ENCODE measurements at regions of chr3 and their contacts with region 1.

Region 1: GRCh38 chr3:115713284-115713683 is 90.0 kb downstream of the GAP43 start:
- DNase-seq: no peak
- CTCF ChIP-seq: no peak

Region 2: DNA sequence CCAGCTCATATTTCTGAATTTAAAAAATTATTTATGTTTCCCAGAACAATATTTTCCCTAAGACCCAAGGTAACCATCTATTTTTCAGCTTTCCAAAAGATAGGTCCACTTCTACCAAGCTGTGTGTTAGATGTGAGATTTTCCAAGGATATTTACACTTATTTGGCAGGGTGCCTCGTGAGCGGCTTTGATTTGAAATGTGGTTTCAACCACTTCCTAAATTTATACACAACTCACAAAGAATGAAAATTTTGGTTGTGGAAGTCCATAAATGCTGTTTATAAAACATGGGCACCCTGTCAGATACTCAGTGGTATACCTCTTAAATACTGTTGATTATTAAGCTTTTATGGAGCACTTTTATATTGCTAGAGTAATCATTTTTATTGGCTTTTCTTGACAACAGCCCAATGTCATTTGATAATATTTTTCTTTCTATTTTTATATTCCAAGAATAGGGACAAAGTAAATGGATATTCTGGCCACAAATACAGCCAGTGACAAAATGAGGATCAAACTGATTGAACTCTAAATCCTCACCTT is 32.4 kb before region 1 on chr3:
- CTCF ChIA-PET with region 1: no interaction called
- POLR2A ChIA-PET with region 1: no interaction called
- DNase-seq: no peak
- CTCF ChIP-seq: no peak

Region 3: DNA sequence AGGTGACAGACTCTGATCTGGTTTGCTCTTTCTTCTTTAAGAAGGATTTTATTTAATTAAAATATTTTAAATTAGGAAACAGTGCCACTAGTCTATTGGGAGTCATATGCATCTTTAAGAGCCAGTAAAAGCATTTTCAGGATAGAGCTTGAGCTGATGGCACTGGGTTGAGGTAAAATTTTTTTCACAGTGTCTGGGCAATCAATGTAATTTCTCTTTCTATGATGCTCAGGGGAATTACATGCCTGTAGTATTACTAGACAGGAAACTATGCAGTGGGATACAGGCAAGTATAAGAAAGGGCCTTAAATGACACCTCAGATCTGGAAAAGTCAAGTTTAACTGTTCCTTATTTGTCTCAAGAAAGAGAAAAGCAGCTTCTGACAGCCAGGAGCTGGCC is 13.6 kb before region 1 on chr3:
- CTCF ChIA-PET with region 1: no interaction called
- POLR2A ChIA-PET with region 1: no interaction called
- DNase-seq: no peak
- CTCF ChIP-seq: no peak

Region 4: DNA sequence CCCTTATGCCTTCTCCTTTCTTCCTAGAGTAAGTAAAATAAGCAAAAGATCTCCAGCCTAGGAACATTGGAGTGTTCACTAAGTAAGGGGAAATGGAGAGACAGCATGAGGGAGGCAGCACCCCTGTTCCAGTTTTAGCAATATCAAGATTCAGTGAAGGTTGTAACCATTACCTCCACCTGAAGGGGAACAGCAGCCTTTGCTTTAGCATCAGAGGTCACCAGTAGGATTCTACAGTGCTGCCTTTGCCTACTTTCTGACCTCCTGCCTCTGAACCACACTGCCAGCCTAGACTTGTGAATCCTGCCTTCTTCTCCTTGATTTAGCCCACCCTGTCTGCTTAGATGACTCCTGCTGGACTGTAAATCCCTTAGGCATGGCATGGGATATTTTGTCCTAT is 14.7 kb after region 1 on chr3:
- CTCF ChIA-PET with region 1: interaction called, 10 read pairs
- POLR2A ChIA-PET with region 1: no interaction called
- DNase-seq: no peak
- CTCF ChIP-seq: no peak